ENCODE measurements at regions of chr11 and their contacts with region 1.

Region 1: GRCh38 chr11:59746111-59746510 is 9.1 kb upstream of the STX3 start:
- DNase-seq: no peak
- H3K4me3 ChIP-seq: no peak overlapping the region
- H3K27ac ChIP-seq: no peak overlapping the region
- H3K4me1 ChIP-seq: no peaks in the 10 kb centered on the region
- H3K27me3 ChIP-seq: no peaks in the 10 kb centered on the region
- CTCF ChIP-seq: no peak
- EP300 ChIP-seq: no peak
- POLR2A ChIP-seq: no peak

Region 2: GRCh38 chr11:59560702-59561469 is 185.2 kb before region 1 on chr11:
- intact Hi-C with region 1: no loop called
- DNase-seq: peak; percentile 85 to 90 (median 89)
- H3K4me3 ChIP-seq: peak overlapping the region; percentile 65
- H3K27ac ChIP-seq: peak overlapping the region; percentile 78 to 85
- H3K4me1 ChIP-seq: peaks cover 4% of the 10 kb centered on the region
- H3K27me3 ChIP-seq: no peaks in the 10 kb centered on the region
- CTCF ChIP-seq: no peak
- EP300 ChIP-seq: no peak
- POLR2A ChIP-seq: peak; percentile 33

Region 3: DNA sequence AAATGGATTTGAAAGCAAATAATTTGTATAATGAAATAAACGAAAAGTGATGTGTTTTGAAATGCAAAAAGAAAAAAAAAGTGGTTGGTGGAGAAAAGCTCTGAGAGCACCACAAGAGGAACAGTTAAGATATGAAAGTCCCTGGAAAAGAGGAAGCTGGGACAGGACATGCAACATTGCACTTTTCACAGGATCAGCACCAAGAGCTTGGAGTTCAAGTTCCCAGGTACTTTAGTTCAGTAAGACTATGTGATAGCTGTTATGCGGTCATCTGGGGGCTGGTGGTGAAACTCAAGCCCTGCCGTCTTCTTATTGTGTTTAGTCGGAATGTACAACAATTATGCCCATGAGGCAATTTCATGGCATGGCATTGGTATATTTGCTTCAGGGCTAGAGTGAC is 517.3 kb after region 1 on chr11:
- intact Hi-C with region 1: loop called in 1 of 4 experiments (anchors 5 kb)
- DNase-seq: no peak
- H3K4me3 ChIP-seq: no peak overlapping the region
- H3K27ac ChIP-seq: no peak overlapping the region
- H3K4me1 ChIP-seq: no peaks in the 10 kb centered on the region
- H3K27me3 ChIP-seq: no peaks in the 10 kb centered on the region
- CTCF ChIP-seq: no peak
- EP300 ChIP-seq: no peak
- POLR2A ChIP-seq: no peak